Dorsolateral prefrontal cortex (tissue), 120 donors: ENCODE measurements at regions of chr15 and their contacts with region 1.

Region 1: DNA sequence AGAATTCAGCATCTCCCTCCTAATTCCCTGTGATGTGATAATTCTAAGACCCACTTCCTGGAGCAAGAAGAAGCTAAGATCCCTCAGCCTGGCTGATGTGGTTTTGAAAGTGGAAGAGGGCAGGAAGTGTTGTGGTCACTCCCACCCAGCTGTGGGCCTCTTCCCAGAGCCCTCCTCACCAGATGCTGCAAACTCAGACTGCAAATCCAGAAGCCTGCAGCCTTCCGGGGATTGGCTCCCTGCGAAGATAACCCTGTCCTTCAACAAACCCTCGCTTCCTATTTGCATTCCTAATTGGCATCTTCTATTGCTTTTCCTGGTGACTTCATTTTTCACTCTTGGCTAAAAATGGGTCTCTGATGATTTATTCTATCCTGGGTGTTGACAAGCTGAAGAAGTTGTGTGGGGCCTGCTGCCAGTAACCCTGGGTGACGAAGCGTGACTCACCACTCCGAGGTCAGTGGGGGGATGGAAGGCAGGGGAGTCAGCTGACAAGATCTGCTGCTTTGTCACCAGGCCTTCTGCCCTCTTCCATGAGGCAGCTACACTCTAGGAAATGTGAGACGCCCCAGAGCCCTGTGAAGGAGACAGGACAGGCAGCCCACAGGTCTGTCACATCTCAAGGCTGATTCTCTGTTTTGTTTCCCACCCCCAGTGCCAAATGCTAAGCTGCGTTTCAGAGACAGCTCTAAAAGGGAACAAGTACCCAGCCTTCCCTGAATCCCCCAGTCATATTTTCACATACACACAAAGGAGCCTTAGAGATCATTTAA is 99.7 kb upstream of the LIPC start:
- DNase-seq: peak; percentile 48 to 95 (median 88)
- H3K4me3 ChIP-seq: peak overlapping the region in 35 of 59 donors; percentile 0 to 42 (median 18)
- H3K27ac ChIP-seq: peak overlapping the region; percentile 63 to 96 (median 90)
- H3K27me3 ChIP-seq: no peaks in the 10 kb centered on the region
- CTCF ChIP-seq: peak in 5 of 56 donors; percentile 11 to 29 (median 18)

Region 2: DNA sequence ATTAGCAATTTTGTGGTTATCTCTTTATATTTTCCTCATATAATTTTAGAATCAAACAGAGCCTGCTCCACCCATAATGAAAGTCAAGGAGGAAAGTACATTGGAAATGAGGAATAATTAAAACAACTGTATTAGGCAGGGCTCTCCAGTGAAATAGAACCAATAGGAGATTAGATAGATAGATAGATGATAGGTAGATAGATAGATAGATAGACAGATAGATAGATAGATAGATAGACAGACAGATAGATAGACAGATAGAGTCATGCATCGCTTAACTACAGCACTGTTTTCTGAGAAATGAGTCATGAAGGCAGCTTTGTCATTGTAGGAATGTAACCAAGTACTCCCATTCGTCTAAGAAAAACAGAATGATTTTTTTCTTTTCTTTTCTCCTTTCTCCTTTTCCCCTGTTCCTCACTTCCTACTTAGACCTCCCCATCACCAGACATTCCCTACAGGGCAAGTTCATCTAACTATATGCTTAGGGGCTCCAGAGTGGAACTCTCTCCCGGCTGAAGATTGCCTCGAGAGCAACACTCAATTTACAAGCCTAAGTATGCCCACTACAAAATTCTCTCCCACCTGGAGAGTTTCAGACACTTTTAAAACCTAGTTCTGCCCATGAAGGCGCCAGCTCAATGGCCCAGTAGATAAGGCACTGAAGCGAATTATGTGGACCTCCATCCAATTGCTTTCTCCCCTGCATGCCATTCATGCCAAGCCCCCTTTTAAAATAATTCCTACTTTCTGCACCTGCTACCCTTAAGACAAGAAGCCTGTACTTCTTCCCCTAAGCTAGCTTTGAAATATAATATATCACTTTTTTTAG is 46.4 kb after region 1 on chr15:
- intact Hi-C with region 1: no loop called
- DNase-seq: no peak
- H3K4me3 ChIP-seq: no peak overlapping the region
- H3K27ac ChIP-seq: no peak overlapping the region
- H3K27me3 ChIP-seq: no peaks in the 10 kb centered on the region
- CTCF ChIP-seq: no peak

Region 3: DNA sequence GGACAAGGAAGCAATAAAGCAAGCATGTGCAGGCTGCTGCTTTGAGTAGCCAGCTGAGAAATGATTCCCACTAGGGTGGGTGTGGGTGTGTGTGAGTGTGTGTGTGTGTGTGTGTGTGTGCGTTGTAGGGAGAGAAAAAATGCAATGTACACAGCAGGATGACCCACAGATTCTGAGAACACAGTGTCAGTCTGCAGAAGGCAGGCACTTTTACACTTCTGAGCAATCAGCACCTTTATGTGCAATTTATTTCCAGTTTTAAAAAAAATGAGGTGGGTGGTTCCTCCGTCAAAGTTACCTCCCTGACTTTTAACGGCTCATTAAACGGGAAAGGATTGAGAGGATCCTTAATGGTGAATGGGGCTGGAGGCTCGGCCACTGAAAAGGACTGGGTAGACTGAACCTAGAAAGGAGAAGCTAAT is 61.2 kb after region 1 on chr15:
- intact Hi-C with region 1: loop called in 1 of 2 experiments (anchors 5 kb)
- DNase-seq: peak in 2 of 10 donors; percentile 40 to 41
- H3K4me3 ChIP-seq: no peak overlapping the region
- H3K27ac ChIP-seq: peak overlapping the region in 19 of 59 donors; percentile 6 to 68 (median 45)
- H3K27me3 ChIP-seq: no peaks in the 10 kb centered on the region
- CTCF ChIP-seq: no peak

Region 4: GRCh38 chr15:58407376-58407775 is 75.3 kb after region 1 on chr15:
- intact Hi-C with region 1: loop called in 1 of 2 experiments (anchors 2 kb)
- DNase-seq: peak in 5 of 10 donors; percentile 16 to 74 (median 47)
- H3K4me3 ChIP-seq: peak overlapping the region in 2 of 59 donors; percentile 3 to 11
- H3K27ac ChIP-seq: peak overlapping the region in 39 of 59 donors; percentile 2 to 80 (median 53)
- H3K27me3 ChIP-seq: no peaks in the 10 kb centered on the region
- CTCF ChIP-seq: peak in 13 of 56 donors; percentile 11 to 54 (median 23)

Region 5: GRCh38 chr15:58770857-58771620 is 438.9 kb after region 1 on chr15 and contains the start of gene MINDY2:
- intact Hi-C with region 1: loop called in 1 of 2 experiments (anchors 5 kb)
- DNase-seq: peak; percentile 96 to 99 (median 98)
- H3K4me3 ChIP-seq: peak within 1 kb of the TSS; percentile 67 to 99 (median 95)
- H3K27ac ChIP-seq: peak within 1 kb of the TSS; percentile 91 to 100 (median 99)
- H3K27me3 ChIP-seq: no peaks in the 10 kb centered on the region
- CTCF ChIP-seq: peak in 47 of 56 donors; percentile 4 to 68 (median 35)
- total RNA-seq, gene MINDY2: 28.6 to 56.4 (median 40.0) TPM